Colonic mucosa (tissue), 4 donors: ENCODE measurements at regions of chr14 and their contacts with region 1.

Region 1: GRCh38 chr14:67285876-67286452 is 44.7 kb downstream of the PALS1 start:
- DNase-seq: no peak
- H3K4me3 ChIP-seq: no peak overlapping the region
- H3K27ac ChIP-seq: no peak overlapping the region
- H3K4me1 ChIP-seq: no peaks in the 10 kb centered on the region
- H3K27me3 ChIP-seq: no peaks in the 10 kb centered on the region
- CTCF ChIP-seq: peak; percentile 47

Region 2: DNA sequence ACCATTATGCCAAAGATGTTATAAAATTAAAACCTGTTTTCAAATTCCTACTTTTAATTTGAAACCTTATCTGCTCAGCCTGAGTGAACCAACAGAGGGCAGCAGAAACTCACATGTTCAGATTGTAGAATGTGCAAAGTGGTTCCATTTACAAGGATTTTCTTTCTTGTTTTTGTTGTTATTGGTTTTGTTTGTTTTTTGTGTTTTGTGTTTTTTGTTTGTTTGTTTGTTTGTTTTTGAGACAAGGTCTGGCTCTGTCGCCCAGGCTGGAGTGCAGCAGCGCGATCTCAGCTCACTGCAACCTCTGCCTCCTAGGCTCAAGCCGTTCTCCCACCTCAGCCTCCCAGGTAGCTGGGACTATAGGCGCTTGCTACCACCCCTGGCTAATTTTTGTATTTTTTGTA is 119.5 kb before region 1 on chr14:
- intact Hi-C with region 1: loop called (anchors 5 kb)
- DNase-seq: peak; percentile 42
- H3K4me3 ChIP-seq: no peak overlapping the region
- H3K27ac ChIP-seq: no peak overlapping the region
- H3K4me1 ChIP-seq: no peaks in the 10 kb centered on the region
- H3K27me3 ChIP-seq: no peaks in the 10 kb centered on the region
- CTCF ChIP-seq: peak; percentile 76